ENCODE measurements at regions of chr14 and their contacts with region 1.

Region 1: GRCh38 chr14:91286530-91286937 is 42.0 kb upstream of the GPR68 start:
- DNase-seq: peak in 1 of 2 donors; percentile 79
- H3K4me3 ChIP-seq: no peak overlapping the region
- H3K27ac ChIP-seq: no peak overlapping the region
- H3K4me1 ChIP-seq: no peaks in the 10 kb centered on the region
- H3K27me3 ChIP-seq: no peaks in the 10 kb centered on the region
- CTCF ChIP-seq: peak; percentile 70 to 89 (median 76)

Region 2: GRCh38 chr14:90903101-90903500 is 383.4 kb before region 1 on chr14:
- intact Hi-C with region 1: loop called (anchors 2 kb)
- DNase-seq: no peak
- H3K4me3 ChIP-seq: no peak overlapping the region
- H3K27ac ChIP-seq: no peak overlapping the region
- H3K4me1 ChIP-seq: no peaks in the 10 kb centered on the region
- H3K27me3 ChIP-seq: no peaks in the 10 kb centered on the region
- CTCF ChIP-seq: peak; percentile 65 to 69 (median 68)

Region 3: GRCh38 chr14:91177073-91178034 is 109.2 kb before region 1 on chr14:
- intact Hi-C with region 1: loop called (anchors 1 kb)
- DNase-seq: no peak
- H3K4me3 ChIP-seq: no peak overlapping the region
- H3K27ac ChIP-seq: no peak overlapping the region
- H3K4me1 ChIP-seq: no peaks in the 10 kb centered on the region
- H3K27me3 ChIP-seq: no peaks in the 10 kb centered on the region
- CTCF ChIP-seq: peak; percentile 40 to 73 (median 46)

Measured in ascending aorta (tissue), 2 donors.